ENCODE measurements at regions of chr19 and their contacts with region 1.

Region 1: DNA sequence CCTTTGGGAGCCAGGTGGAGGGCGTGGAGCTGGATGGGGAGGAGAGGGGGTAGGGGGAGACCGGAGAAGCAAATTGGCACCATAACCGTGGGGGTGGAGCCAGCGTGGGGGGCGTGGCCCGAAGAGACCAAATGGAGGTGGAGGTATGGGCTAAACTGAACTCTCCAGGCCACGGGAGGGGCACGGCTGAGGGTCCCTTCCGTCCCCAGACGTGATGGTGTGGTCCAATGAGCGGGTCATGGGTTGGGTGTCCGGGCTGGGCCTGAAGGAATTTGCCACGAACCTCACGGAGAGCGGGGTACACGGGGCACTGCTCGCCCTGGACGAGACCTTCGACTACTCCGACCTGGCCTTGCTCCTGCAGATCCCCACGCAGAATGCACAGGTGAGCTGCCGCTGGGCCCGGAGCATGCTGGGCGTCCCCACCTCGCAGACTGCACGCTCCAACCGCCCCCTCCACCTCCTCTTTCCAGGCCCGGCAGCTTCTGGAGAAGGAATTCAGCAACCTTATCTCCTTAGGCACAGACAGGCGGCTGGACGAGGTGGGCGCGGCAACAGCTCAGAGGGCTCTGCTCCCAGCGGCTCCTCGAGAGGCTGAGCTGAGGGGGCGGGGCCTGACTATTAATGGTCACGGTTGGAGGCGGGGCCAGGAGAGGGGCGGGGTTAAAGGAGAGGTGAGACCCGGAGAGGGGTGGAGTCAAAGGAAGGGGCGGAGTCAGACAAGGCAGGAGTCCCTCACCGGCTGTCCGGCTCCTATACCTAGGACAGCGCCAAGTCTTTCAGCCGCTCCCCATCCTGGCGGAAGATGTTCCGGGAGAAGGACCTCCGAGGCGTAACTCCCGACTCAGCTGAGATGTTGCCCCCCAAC is 6.2 kb downstream of the HRC start:
- DNase-seq: peak; percentile 94
- H3K4me3 ChIP-seq: peak overlapping the region; percentile 91 to 96
- H3K27ac ChIP-seq: peak overlapping the region; percentile 68 to 87; a peak in 3 of 4 replicates
- H3K4me1 ChIP-seq: peaks cover 3 to 27% of the 10 kb centered on the region in 2 experiments; a peak in 2 of 4 replicates
- H3K27me3 ChIP-seq: no peaks in the 10 kb centered on the region
- CTCF ChIP-seq: no peak
- EP300 ChIP-seq: no peak
- RAD21 ChIP-seq: no peak

Region 2: DNA sequence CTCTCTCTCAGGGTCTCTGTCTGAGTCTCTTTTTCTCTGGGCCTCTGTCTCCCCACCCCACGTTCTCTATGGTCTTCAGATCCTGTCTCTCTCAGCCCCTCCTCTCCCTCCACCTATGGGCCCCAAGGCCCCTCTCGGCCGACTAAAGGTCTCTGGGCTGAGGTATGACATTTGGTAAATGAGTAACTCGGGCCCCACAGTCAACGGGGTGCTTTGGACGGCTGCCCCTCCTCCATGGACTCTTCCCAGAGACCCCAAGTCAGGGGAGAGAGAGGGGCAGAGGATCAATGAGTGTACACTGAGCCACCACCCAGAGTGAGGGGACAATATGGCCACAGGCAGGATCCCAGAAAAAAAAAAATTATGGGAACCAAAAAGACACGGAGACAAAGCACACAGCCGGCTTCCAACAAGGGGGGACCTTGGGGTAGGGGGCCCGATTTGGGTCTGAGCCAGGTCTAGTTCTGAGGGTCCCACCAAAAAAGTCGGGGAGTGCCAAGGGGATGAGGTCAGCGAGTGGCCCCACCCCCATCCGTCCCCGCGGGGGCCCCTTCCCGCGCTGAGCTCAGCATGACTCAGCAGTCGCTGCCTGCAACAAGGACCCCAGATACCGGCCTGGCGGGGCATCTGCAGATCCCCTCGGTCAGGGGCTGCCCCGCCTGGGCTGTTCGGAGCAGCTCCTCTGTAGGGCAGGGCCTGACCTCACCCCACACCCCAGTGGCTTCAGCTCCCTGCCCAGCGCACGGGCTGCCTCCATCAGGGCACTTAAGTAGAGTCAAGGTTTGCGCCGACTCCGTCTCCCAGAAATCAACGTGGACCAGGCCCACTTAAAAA is 185.4 kb before region 1 on chr19:
- CTCF ChIA-PET with region 1: no interaction called
- POLR2A ChIA-PET with region 1: no interaction called
- DNase-seq: no peak
- H3K4me3 ChIP-seq: no peak overlapping the region
- H3K27ac ChIP-seq: peak overlapping the region; percentile 62 to 77
- H3K4me1 ChIP-seq: peaks cover 17 to 26% of the 10 kb centered on the region in 2 experiments; a peak in 3 of 4 replicates
- H3K27me3 ChIP-seq: no peaks in the 10 kb centered on the region
- CTCF ChIP-seq: no peak
- EP300 ChIP-seq: no peak; a peak in 1 of 4 replicates
- RAD21 ChIP-seq: no peak

Region 3: GRCh38 chr19:49118565-49119410 is 30.2 kb before region 1 on chr19 and contains the start of gene C19orf73:
- CTCF ChIA-PET with region 1: interaction called, 20 read pairs
- POLR2A ChIA-PET with region 1: interaction called, 3 read pairs
- DNase-seq: peak; percentile 99
- H3K4me3 ChIP-seq: peak within 1 kb of the TSS; percentile 61 to 69
- H3K27ac ChIP-seq: peak within 1 kb of the TSS; percentile 82 to 93
- H3K4me1 ChIP-seq: peaks cover 5 to 21% of the 10 kb centered on the region in 2 experiments; a peak in 1 of 4 replicates
- H3K27me3 ChIP-seq: no peaks in the 10 kb centered on the region
- CTCF ChIP-seq: 0 out of 2 replicates have a peak, but pooled peaks have one; percentile 13
- EP300 ChIP-seq: no peak
- RAD21 ChIP-seq: no peak
- polyA plus RNA-seq, gene C19orf73: 2.6 and 3.0 TPM in 2 replicates

Region 4: DNA sequence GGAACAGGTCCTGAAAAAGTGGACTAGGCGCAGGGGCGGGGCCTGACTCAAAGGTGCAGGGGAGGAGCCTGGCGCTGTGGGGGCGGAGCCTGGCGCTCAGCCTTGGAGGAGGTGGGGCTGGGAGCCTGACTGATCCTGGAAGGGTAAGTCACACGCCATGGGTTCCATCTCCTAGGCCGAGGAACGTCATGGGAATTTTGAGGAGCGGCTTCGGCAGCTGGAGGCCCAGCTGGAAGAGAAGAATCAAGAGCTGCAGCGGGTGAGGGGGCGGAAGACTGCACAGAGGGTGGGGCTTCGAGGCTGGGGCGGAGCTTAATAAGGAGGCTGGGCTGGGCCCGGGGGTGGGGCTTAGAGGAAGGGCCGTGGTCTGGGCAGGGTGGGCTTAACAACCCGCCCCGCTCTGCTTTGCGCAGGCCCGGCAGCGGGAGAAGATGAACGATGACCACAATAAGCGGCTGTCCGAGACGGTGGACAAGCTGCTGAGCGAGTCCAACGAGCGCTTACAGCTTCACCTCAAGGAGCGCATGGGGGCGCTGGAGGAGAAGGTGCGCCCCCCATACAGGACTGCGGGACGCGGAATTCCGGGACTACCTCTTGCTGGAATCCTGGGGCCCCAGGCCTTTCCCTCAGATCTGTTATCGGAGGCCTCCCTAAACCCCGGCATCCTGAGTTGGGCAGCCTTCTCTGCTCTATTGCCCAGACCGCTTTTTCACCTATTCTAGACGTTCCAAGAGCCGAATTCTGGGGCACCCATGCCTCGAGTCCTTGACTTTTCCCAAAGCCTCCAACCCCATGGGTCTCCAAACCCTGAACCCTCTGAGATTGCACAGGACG is 15.2 kb before region 1 on chr19:
- CTCF ChIA-PET with region 1: interaction called, 15 read pairs
- POLR2A ChIA-PET with region 1: no interaction called
- DNase-seq: peak; percentile 78
- H3K4me3 ChIP-seq: no peak overlapping the region
- H3K27ac ChIP-seq: no peak overlapping the region
- H3K4me1 ChIP-seq: peaks cover 3% of the 10 kb centered on the region in 2 experiments; a peak in 2 of 4 replicates
- H3K27me3 ChIP-seq: no peaks in the 10 kb centered on the region
- CTCF ChIP-seq: no peak
- EP300 ChIP-seq: no peak
- RAD21 ChIP-seq: no peak

Region 5: DNA sequence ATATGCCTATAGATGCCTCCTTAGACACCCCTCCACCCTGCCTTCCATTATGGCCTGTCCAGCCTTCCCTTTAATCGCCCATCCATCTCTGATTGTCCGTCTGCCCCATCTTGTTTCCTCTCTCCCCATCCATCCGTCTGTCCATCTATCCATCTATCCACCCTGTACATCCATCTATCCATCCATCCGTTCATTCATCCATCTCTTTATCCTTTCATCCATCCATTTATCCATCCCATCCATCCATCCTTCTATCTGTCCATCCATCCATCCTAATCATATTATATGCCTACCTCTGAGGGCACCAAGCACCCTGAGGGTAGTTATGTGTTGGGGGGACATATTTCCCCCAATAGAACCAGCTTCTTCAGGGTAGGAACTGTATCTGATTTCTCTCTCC is 31.6 kb after region 1 on chr19:
- CTCF ChIA-PET with region 1: no interaction called
- POLR2A ChIA-PET with region 1: no interaction called
- DNase-seq: no peak
- H3K4me3 ChIP-seq: no peak overlapping the region
- H3K27ac ChIP-seq: no peak overlapping the region
- H3K4me1 ChIP-seq: no peaks in the 10 kb centered on the region
- H3K27me3 ChIP-seq: no peaks in the 10 kb centered on the region
- CTCF ChIP-seq: no peak
- EP300 ChIP-seq: no peak
- RAD21 ChIP-seq: no peak